Activated CD4-positive, alpha-beta T cell treated with anti-CD3 and anti-CD28 coated beads, Interleukin-2, amount 10 ng/mL, durations not matched to agents 24 days and 14 days (primary cell): ENCODE measurements at regions of chr18 and their contacts with region 1.

Region 1: GRCh38 chr18:55589625-55590291 is 1.8 kb upstream of the TCF4 start:
- DNase-seq: peak; percentile 96
- H3K4me3 Mint-ChIP-seq: peak overlapping the region; percentile 86
- H3K27ac Mint-ChIP-seq: peak overlapping the region; percentile 83
- H3K4me1 Mint-ChIP-seq: peaks cover 21% of the 10 kb centered on the region
- H3K27me3 Mint-ChIP-seq: peaks cover 30% of the 10 kb centered on the region

Region 2: DNA sequence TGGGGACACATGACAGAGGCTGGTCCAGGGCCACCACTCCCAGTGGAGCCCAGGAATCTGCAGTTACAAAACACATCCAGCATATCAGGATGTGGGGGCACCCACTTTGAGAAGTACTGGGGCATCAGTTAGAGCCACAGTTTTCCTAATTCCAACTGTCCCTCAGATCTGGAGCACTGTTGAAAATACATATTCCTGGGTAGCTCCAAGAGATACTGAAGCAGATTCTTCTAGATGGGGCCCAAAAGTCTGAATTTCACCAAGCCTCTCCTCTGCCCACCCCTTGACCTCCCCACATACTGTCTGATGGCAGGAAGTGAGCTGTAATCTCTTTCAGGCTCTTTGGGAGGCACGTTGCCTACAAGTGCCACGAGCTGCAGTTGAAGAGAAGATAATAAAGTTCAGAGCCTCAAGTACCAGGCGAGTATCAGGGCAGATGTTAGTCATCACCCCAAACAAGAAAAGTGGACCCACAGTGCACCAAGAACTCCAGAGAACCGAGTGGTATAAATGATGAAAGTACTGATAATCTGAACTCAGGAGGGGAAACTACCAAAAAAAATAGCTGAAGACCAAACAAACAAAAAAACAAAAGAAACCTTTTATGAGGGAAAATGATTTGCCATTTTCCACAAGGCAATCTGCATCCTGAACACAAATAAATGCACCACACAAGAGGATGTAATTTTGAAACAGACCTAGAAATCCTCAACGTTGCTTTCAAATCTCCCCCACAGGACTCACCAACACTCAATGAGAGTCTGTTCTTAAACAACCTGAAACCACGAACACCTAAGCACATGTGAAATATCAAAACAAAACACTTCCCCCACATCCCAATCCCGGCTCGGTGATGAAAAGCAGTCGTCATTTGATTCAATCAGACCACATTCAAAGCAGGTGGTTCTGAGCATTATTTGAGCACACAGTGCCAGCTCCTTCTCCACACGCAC is 100.4 kb before region 1 on chr18:
- intact Hi-C with region 1: loop called (anchors 5 kb)
- DNase-seq: no peak
- H3K4me3 Mint-ChIP-seq: peak overlapping the region; percentile 14
- H3K27ac Mint-ChIP-seq: peak overlapping the region; percentile 82
- H3K4me1 Mint-ChIP-seq: peaks cover 9% of the 10 kb centered on the region
- H3K27me3 Mint-ChIP-seq: peaks cover 43% of the 10 kb centered on the region